Psoas muscle (tissue), 8 donors: ENCODE measurements at regions of chr13 and their contacts with region 1.

Region 1: GRCh38 chr13:40344270-40345148 is 321.9 kb downstream of the FOXO1 start:
- DNase-seq: peak; percentile 50 to 86
- ATAC-seq: peak; percentile 82 to 86 (median 85)
- H3K4me3 ChIP-seq: no peak overlapping the region
- H3K27ac ChIP-seq: peak overlapping the region; percentile 81
- H3K4me1 ChIP-seq: peaks cover 44% of the 10 kb centered on the region
- H3K27me3 ChIP-seq: no peaks in the 10 kb centered on the region
- CTCF ChIP-seq: no peak

Region 2: DNA sequence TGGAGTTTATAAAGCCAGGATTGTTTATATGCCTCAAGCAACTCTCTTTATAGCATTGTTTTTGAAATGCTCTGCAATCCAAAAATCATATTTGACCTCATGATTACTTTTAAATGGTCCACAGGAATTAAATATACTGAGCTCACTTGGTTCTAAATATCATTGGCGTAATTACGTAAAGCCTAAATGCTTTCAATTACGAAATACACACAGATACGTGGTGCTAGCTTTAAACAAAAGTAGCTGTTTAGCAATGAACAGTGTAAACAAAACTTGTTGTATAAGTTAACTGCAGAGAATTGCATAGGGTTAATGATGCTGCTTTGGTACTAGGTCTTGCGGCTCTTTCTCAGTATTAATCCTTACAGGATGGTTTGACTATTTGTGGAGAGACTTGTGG is 342.5 kb before region 1 on chr13:
- intact Hi-C with region 1: no loop called
- DNase-seq: no peak
- ATAC-seq: no peak
- H3K4me3 ChIP-seq: no peak overlapping the region
- H3K27ac ChIP-seq: no peak overlapping the region
- H3K4me1 ChIP-seq: no peaks in the 10 kb centered on the region
- H3K27me3 ChIP-seq: no peaks in the 10 kb centered on the region
- CTCF ChIP-seq: no peak

Region 3: GRCh38 chr13:40236566-40237168 is 107.8 kb before region 1 on chr13:
- intact Hi-C with region 1: loop called (anchors 5 kb)
- DNase-seq: peak; percentile 62 to 85
- ATAC-seq: peak; percentile 53 to 74 (median 72)
- H3K4me3 ChIP-seq: peak overlapping the region; percentile 42
- H3K27ac ChIP-seq: peak overlapping the region; percentile 91
- H3K4me1 ChIP-seq: peaks cover 28% of the 10 kb centered on the region
- H3K27me3 ChIP-seq: no peaks in the 10 kb centered on the region
- CTCF ChIP-seq: no peak

Region 4: DNA sequence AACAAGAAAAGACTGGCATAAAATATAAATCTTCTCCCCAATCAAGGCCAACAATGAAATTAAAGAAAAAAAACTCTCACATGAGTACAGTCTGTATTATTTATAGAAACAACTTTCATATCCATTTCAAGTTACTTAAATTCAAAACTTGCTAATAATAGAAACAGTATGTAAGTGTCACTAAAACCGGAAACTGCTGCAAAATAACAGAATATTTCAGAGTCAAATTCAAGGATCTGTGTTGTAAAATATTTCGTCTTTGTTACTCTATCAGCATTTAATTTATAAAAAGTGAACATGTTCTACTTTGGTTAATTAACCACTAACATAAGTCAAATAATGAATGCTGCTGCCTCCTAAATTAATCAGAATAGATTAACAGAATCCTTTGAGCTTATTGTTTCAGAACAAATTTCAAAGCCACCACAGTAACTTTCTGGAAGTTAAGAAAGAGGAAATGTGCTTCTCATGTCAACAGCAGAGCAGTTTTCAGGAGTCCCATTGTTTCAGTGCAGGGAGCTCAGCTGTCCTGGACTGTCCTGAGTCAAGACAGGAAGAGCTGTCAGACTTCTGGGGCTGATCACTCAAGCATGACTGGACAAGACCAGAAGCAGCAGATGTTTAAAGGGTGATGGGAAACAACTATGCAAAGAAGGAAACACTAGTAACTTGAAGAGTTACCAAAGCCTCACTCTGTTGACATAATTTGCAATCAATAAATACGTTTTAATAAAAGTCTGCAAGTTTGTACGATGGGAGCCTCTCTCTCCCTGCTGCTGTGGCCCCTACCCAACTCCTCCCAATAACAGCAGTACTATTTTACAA is 245.0 kb after region 1 on chr13:
- intact Hi-C with region 1: loop called in 1 of 2 experiments (anchors 10 kb)
- DNase-seq: peak; percentile 42 to 62
- ATAC-seq: peak; percentile 83 to 90 (median 86)
- H3K4me3 ChIP-seq: peak overlapping the region; percentile 40
- H3K27ac ChIP-seq: peak overlapping the region; percentile 90
- H3K4me1 ChIP-seq: peaks cover 89% of the 10 kb centered on the region
- H3K27me3 ChIP-seq: no peaks in the 10 kb centered on the region
- CTCF ChIP-seq: no peak

Region 5: GRCh38 chr13:40682449-40683240 is 338.1 kb after region 1 on chr13:
- intact Hi-C with region 1: no loop called
- DNase-seq: no peak
- ATAC-seq: peak in 3 of 4 donors; percentile 23 to 55 (median 32)
- H3K4me3 ChIP-seq: no peak overlapping the region
- H3K27ac ChIP-seq: no peak overlapping the region
- H3K4me1 ChIP-seq: peaks cover 25% of the 10 kb centered on the region
- H3K27me3 ChIP-seq: no peaks in the 10 kb centered on the region
- CTCF ChIP-seq: peak; percentile 74